ENCODE measurements at regions of chr15 and their contacts with region 1.

Region 1: DNA sequence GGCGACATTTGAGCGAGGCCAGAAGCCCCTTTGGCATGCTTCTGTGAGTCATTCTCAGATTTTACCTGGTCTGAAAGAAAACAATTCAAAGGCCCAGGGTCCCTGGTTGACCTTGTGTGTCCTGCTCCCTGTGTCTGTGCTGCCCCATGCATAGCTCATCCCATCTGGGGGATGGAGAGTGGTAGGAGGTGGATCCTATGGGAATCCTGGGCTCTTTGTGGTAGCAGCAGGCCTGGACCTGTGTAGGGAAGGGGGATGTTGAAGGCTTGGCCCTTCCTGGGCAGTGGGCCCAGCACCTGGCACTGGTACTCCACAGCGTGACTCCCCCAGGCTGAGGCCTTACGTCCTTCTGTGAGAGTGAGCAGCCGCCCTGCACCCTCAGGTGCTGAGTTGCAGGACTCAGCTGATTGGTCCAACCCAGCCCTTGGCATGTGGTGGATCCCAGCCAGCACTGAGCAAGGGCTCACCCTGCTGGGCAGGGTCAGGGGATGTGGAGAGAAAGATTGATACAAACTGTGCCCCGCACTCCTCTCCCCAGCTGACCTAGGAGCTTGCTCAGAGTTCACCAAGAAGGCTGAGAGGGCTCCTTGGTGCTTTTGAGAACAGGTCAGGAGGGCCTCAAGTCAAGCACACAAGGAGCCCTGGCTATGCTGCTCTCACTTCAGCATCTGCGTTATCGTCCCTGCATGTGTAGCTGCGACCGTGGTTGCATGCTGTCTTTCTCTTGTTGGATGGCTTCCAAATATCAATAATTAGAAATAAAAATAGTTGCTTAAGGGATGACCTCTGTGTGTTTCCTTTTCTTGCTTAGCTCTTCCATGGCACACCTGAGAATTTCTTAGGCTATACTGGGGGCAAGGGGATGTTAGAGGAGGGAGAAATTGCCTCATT is 21.4 kb upstream of the JMJD7 start:
- DNase-seq: peak in 2 of 6 donors; percentile 54
- ATAC-seq: peak; percentile 19 to 65 (median 37)
- H3K4me3 ChIP-seq: no peak overlapping the region
- H3K27ac ChIP-seq: no peak overlapping the region
- H3K4me1 ChIP-seq: no peaks in the 10 kb centered on the region
- H3K27me3 ChIP-seq: no peaks in the 10 kb centered on the region
- CTCF ChIP-seq: no peak

Region 2: DNA sequence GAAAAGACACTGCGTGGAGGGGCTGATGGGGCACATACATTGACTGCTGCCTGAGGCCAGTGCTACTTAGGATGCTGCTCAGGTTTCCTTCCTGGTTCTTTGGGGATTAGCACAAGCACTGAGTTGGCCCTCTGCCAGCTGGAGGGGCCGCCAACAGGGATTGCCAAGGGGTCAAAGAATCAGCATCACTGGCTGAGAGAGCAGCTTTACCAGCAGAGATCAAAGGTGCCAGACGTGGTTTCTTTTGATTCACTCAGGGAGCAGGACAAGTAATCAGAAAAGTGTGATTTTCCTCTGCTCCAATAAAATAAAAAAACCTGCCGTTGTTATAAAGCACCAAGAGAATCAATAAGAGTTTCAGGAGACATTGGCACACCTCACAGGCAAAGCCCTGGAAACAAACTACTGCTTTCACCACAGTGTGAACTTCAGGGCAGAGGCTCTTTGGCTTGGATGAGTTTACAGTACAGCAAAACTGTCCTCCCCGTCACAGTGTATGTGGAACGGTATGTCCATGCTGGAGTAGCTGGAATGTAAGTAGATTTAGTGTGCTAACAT is 1978.1 kb before region 1 on chr15:
- intact Hi-C with region 1: no loop called
- DNase-seq: peak in 3 of 6 donors; percentile 15 to 45 (median 32)
- ATAC-seq: no peak
- H3K4me3 ChIP-seq: no peak overlapping the region
- H3K27ac ChIP-seq: no peak overlapping the region
- H3K4me1 ChIP-seq: no peaks in the 10 kb centered on the region
- H3K27me3 ChIP-seq: no peaks in the 10 kb centered on the region
- CTCF ChIP-seq: no peak

Region 3: GRCh38 chr15:41603941-41604911 is 202.3 kb before region 1 on chr15:
- intact Hi-C with region 1: loop called in 1 of 3 experiments (anchors 10 kb)
- DNase-seq: peak; percentile 38 to 69 (median 53)
- ATAC-seq: peak; percentile 88 to 97 (median 95)
- H3K4me3 ChIP-seq: peak overlapping the region in 1 of 4 donors; percentile 26
- H3K27ac ChIP-seq: no peak overlapping the region
- H3K4me1 ChIP-seq: peaks cover 0 to 4% (median 0%) of the 10 kb centered on the region in 3 donors
- H3K27me3 ChIP-seq: no peaks in the 10 kb centered on the region
- CTCF ChIP-seq: peak; percentile 53 to 73 (median 62)

Region 4: GRCh38 chr15:41849861-41850260 is 43.3 kb after region 1 on chr15:
- intact Hi-C with region 1: no loop called
- DNase-seq: peak in 4 of 6 donors; percentile 36 to 66 (median 56)
- ATAC-seq: peak; percentile 68 to 80 (median 74)
- H3K4me3 ChIP-seq: no peak overlapping the region
- H3K27ac ChIP-seq: no peak overlapping the region
- H3K4me1 ChIP-seq: no peaks in the 10 kb centered on the region
- H3K27me3 ChIP-seq: no peaks in the 10 kb centered on the region
- CTCF ChIP-seq: no peak

Measured in pancreas (tissue), 10 donors.